Posterior vena cava (tissue), 2 donors: ENCODE measurements at regions of chr1 and their contacts with region 1.

Region 1: DNA sequence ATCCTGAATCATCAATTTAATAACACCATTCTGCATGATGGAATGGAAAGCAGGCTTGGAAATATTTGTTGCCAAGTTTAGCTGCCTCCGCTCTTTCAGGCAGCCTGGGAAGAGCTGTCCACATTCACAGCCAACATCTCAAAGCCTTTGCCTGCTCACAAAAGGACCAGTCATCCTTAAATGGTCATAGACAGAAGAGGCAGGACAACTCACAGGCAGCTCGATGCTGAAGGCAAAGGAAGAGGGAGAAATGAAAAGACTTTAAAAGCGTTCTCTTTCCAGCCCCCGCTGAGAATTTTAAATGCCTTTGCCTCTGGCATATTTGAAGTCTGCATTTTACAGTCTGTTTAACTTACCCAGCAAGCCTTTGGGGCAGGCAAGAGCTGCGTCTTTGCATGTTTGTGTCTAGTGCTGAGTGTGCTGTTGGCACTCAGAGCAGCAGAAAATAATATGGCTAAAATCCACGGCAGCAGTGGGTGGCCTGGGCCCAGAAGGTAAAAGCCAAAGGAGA is 68.9 kb downstream of the NMNAT2 start:
- DNase-seq: no peak

Region 2: GRCh38 chr1:184518736-184519357 is 1169.6 kb after region 1 on chr1:
- intact Hi-C with region 1: loop called in 1 of 2 experiments (anchors 5 kb)
- DNase-seq: no peak